Right cardiac atrium (tissue), 5 donors: ENCODE measurements at regions of chr4 and their contacts with region 1.

Region 1: DNA sequence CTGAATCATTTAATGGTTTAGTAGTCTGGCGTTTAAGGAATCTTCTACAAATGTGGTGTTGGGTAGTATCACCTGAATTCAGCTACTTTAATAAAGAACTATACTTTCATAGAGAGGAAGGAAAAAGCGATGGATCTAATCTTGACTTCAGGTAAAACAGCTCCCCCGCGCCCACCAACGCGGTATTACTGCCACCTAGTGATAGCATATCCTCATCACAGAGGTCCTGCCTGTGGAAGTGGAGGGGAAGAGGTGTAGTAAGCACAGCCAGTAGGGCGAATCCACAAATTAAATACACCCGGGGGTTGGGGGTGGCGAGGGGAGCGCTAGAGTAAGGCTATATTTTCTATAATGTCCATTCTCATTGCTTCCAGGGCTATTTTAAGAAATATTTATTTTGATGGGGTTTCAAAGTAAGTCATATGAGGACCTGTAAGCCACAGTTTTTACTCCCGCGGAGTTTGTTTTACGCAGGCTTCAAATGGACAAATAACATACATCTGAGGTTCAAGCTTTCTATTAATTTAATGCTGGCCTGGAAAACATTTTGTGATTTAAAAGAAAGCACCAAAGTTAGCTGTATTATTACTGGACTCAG is 8.3 kb upstream of the DAPP1 start:
- DNase-seq: peak; percentile 17 to 75 (median 65)
- ATAC-seq: peak; percentile 65 to 67
- H3K4me3 ChIP-seq: no peak overlapping the region
- H3K27ac ChIP-seq: no peak overlapping the region
- H3K4me1 ChIP-seq: no peaks in the 10 kb centered on the region
- H3K27me3 ChIP-seq: no peaks in the 10 kb centered on the region

Region 2: DNA sequence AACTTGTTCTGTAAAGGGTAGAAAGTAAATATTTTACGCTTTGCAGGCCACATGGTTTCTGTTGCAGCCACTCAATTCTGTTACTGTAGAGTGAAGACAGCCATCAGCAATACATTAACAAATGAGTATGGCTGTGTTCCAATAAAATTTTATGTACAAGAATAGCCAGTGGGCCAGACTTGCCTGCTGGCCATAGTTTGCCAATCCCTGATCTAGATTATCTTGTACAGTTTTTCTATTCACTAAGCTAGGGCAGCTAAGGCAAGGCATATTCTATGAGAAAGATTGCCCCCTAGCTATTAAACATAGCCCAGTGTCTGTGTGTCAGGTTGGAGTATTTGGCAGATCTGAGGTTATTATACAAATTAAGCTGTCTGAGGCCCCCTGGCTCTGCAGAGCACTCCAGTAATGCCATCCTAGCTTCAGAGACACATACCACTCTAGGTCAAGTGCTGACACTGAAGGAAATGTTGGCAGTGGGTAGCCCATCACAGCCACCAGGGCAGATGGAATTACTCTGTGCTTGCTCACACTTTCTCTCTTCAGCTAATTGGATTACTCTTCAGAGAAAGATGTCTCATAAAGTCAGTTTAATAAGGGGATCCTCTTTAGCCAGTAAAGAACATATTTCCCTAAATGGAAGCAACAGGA is 193.1 kb before region 1 on chr4:
- intact Hi-C with region 1: loop called in 2 of 4 experiments (anchors 10 kb)
- DNase-seq: peak in 1 of 3 donors; percentile 28
- ATAC-seq: peak; percentile 89 to 92
- H3K4me3 ChIP-seq: no peak overlapping the region
- H3K27ac ChIP-seq: peak overlapping the region; percentile 85
- H3K4me1 ChIP-seq: peaks cover 1% of the 10 kb centered on the region
- H3K27me3 ChIP-seq: no peaks in the 10 kb centered on the region

Region 3: GRCh38 chr4:99723612-99724011 is 84.7 kb before region 1 on chr4:
- intact Hi-C with region 1: loop called in 2 of 4 experiments (anchors 10 kb)
- DNase-seq: peak; percentile 48 to 76 (median 73)
- ATAC-seq: peak; percentile 94
- H3K4me3 ChIP-seq: no peak overlapping the region
- H3K27ac ChIP-seq: peak overlapping the region; percentile 92
- H3K4me1 ChIP-seq: peaks cover 7% of the 10 kb centered on the region
- H3K27me3 ChIP-seq: no peaks in the 10 kb centered on the region

Region 4: DNA sequence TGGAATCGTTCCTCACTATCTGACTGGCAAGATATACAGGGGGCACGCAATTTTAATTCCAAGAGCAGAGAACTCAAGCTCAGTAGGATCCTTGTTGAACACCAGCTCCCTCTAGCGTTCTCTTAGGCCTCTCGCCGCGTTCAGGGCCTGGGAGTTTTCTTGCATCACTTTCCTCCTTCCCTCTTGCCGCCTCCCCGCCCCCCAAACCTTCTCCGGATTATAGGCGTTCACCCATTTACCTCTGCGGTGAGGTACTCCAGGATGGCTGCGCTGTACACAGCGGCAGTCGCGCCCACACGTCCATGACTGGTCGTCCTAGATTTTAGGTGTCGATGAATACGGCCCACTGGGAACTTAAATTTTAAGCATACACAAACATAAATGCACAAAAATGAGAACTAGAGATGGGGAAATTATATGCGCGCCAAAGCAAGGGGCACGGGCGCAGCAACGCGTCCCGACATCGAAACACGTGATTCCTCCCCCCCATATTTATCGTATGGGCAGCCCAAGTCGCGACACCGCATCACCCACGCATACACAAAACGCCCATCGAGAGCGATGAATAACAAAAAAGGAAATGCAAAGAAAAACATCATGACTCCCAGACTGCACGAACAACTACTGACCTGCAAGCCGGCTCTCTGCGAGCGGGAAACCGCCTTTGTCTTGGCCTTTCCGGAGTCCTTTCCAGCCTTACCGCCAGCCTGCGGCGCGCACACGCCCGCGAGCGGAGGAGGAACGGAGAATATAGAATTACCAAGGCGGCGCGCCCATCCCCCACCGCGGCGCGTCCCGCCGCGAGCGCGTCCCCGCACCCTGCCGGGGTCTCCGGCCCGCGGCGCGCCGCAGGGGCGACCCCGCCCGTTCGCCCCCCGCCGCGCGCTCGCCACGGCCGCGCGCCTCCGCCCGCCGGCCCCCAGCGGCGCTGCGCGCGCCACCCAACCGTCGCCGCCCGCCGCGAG is 141.0 kb after region 1 on chr4:
- intact Hi-C with region 1: loop called in 1 of 4 experiments (anchors 5 kb)
- DNase-seq: peak; percentile 83 to 92 (median 92)
- ATAC-seq: peak; percentile 32 to 38
- H3K4me3 ChIP-seq: peak overlapping the region; percentile 62
- H3K27ac ChIP-seq: peak overlapping the region; percentile 99
- H3K4me1 ChIP-seq: peaks cover 1% of the 10 kb centered on the region
- H3K27me3 ChIP-seq: no peaks in the 10 kb centered on the region